Naive thymus-derived CD4-positive, alpha-beta T cell (primary cell): ENCODE measurements at regions of chr4 and their contacts with region 1.

Region 1: DNA sequence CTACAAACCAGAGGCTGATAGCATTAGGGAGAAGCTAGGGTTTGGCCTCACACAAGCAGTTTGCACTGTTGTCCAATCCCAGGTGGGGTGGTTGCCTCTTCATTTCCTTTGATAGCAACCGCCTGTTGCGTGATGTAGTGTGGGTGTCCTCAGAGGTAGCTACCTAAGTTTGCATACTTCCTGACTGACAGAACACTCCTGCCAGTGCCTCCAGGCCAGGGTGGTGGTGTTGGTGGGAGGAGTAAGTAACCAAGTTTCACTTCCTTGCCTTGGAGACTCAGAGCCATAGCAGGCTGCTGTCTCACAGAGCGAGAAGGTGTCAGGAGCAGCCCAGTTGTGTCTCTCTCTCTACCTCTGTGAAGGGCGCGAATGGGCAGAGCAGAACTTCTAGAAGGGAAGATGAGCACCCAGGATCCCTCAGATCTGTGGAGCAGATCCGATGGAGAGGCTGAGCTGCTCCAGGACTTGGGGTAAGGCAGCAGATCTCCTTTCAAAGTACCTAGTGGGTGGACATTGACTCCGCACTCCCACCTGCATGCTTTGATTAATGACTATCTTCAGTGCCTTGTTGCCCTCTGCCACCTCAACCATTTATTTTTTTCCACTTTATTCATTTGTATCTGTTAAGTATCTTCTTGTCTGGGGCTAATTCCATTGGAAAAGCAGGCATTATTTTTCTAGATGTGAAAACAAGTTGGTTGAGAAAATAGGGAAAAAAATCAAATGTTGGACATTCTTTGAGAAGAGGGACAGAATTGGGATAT is at the start of gene DAPP1:
- DNase-seq: peak; percentile 44 to 88 (median 84)
- ATAC-seq: peak; percentile 95
- H3K4me3 ChIP-seq: peak within 1 kb of the TSS; percentile 71
- H3K4me3 Mint-ChIP-seq: peak within 1 kb of the TSS; percentile 71 to 95 (median 92)
- H3K27ac ChIP-seq: peak within 1 kb of the TSS; percentile 77
- H3K27ac Mint-ChIP-seq: peak within 1 kb of the TSS; percentile 87 to 98 (median 96)
- H3K4me1 ChIP-seq: peaks cover 16 to 32% of the 10 kb centered on the region in 2 donors
- H3K4me1 Mint-ChIP-seq: peaks cover 41 to 72% (median 63%) of the 10 kb centered on the region in 7 donors
- H3K27me3 ChIP-seq: no peaks in the 10 kb centered on the region
- H3K27me3 Mint-ChIP-seq: no peaks in the 10 kb centered on the region
- total RNA-seq, gene DAPP1: 10.9 to 49.6 (median 20.7) TPM

Region 2: GRCh38 chr4:98143001-98143899 is 1673.5 kb before region 1 on chr4 and contains the start of gene STPG2:
- CTCF ChIA-PET with region 1: no interaction called
- POLR2A ChIA-PET with region 1: no interaction called
- intact Hi-C with region 1: loop called in 1 of 2 experiments (anchors 5 kb)
- DNase-seq: peak; percentile 85 to 93 (median 91)
- ATAC-seq: peak; percentile 100
- H3K4me3 ChIP-seq: peak within 1 kb of the TSS; percentile 85
- H3K4me3 Mint-ChIP-seq: peak within 1 kb of the TSS; percentile 87 to 99 (median 94)
- H3K27ac ChIP-seq: peak within 1 kb of the TSS; percentile 84
- H3K27ac Mint-ChIP-seq: peak within 1 kb of the TSS; percentile 96 to 99 (median 98)
- H3K4me1 ChIP-seq: peaks cover 6 to 10% of the 10 kb centered on the region in 2 donors
- H3K4me1 Mint-ChIP-seq: peaks cover 12 to 28% (median 24%) of the 10 kb centered on the region in 7 donors
- H3K27me3 ChIP-seq: no peaks in the 10 kb centered on the region
- H3K27me3 Mint-ChIP-seq: peaks cover 0 to 16% (median 0%) of the 10 kb centered on the region in 5 donors
- total RNA-seq, gene STPG2: 0.19 to 0.47 (median 0.30) TPM in 4 of 5 experiments, not detected in the other

Region 3: DNA sequence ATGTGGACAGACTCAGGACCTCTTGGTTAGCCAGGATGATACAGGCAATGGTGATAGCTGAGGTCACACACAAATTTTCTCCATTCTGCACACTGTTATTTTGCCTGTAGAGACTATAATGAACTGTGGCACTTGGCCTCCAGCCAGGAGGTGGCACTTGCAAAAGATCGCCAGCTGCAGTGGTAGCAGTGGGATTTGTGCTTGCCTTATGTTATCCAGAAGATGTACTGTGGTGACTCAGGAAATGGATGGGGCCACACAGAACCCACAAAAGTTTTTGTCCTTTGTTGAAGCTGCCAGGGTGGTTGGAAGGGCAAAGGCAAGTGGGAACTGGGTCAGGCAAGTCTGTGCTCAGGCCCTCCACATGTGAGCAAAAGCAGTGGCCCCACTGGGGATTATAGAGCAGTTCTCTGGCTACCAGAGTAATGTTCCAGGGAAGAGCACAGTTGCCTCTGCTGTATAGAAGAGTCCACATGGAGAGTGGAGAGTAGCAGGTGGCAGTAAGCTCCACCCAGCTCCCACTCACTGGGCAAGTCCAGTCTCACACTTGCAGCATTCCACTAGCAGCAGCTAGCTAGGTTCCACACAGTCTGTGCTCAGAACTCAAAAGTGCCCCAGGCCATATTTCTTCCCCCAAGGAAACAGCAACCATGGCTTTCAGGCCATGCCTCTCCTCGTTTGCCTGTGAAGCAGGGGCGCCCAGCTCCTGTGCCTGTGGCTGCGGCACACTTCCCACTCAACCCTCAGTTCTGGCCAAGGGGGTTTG is 311.7 kb before region 1 on chr4:
- CTCF ChIA-PET with region 1: no interaction called
- POLR2A ChIA-PET with region 1: no interaction called
- intact Hi-C with region 1: loop called (anchors 2 to 5 kb)
- DNase-seq: no peak
- ATAC-seq: no peak
- H3K4me3 ChIP-seq: no peak overlapping the region
- H3K4me3 Mint-ChIP-seq: peak overlapping the region in 3 of 10 donors; percentile 14 to 76 (median 56)
- H3K27ac ChIP-seq: no peak overlapping the region
- H3K27ac Mint-ChIP-seq: peak overlapping the region in 8 of 9 donors; percentile 14 to 91 (median 40)
- H3K4me1 ChIP-seq: peaks cover 8 to 33% of the 10 kb centered on the region in 2 donors
- H3K4me1 Mint-ChIP-seq: peaks cover 31 to 63% (median 57%) of the 10 kb centered on the region in 7 donors
- H3K27me3 ChIP-seq: no peaks in the 10 kb centered on the region
- H3K27me3 Mint-ChIP-seq: peaks cover 0 to 2% (median 0%) of the 10 kb centered on the region in 5 donors

Region 4: GRCh38 chr4:99847362-99847976 is 30.7 kb after region 1 on chr4:
- CTCF ChIA-PET with region 1: no interaction called
- POLR2A ChIA-PET with region 1: interaction called, 35 read pairs
- intact Hi-C with region 1: loop called (anchors 1 kb)
- DNase-seq: peak in 6 of 9 donors; percentile 13 to 39 (median 26)
- ATAC-seq: peak; percentile 61
- H3K4me3 ChIP-seq: peak overlapping the region; percentile 9
- H3K4me3 Mint-ChIP-seq: peak overlapping the region in 9 of 10 donors; percentile 49 to 85 (median 75)
- H3K27ac ChIP-seq: peak overlapping the region; percentile 70
- H3K27ac Mint-ChIP-seq: peak overlapping the region; percentile 88 to 99 (median 96)
- H3K4me1 ChIP-seq: peaks cover 8 to 27% of the 10 kb centered on the region in 2 donors
- H3K4me1 Mint-ChIP-seq: peaks cover 31 to 75% (median 65%) of the 10 kb centered on the region in 7 donors
- H3K27me3 ChIP-seq: no peaks in the 10 kb centered on the region
- H3K27me3 Mint-ChIP-seq: no peaks in the 10 kb centered on the region

Region 5: DNA sequence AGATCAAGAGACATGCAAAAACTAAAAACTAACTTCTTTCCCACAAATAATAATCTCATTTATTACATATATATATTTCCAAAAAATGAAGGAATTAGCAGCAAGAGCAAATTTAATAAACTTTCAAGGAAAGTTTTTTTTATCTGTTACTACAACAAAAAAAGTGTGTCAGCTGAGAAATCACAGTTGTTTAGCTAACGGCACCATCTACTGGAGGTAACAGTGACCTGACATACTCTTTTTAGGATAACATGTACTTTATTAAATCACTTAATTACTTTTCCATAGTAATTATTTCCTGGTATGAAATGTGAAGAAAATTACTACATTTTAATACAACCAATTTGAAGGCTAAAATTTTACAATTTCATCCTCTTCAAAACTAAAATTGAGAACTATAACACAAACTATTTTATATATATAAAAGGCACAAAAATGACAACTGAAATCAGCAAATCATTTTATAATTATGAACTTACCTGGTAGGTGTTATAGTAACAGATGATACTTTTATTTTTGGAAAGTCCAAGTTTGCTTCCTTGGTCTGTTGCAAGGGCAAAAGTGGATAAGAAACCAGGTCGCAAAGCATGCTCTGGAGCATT is 68.4 kb after region 1 on chr4:
- CTCF ChIA-PET with region 1: interaction called, 6 read pairs
- POLR2A ChIA-PET with region 1: no interaction called
- intact Hi-C with region 1: loop called (anchors 1 kb)
- DNase-seq: peak in 7 of 9 donors; percentile 34 to 64 (median 54)
- ATAC-seq: peak; percentile 72
- H3K4me3 ChIP-seq: no peak overlapping the region
- H3K4me3 Mint-ChIP-seq: no peak overlapping the region
- H3K27ac ChIP-seq: no peak overlapping the region
- H3K27ac Mint-ChIP-seq: no peak overlapping the region
- H3K4me1 ChIP-seq: peaks cover 0 to 2% of the 10 kb centered on the region in 2 donors
- H3K4me1 Mint-ChIP-seq: peaks cover 0 to 19% (median 13%) of the 10 kb centered on the region in 7 donors
- H3K27me3 ChIP-seq: no peaks in the 10 kb centered on the region
- H3K27me3 Mint-ChIP-seq: no peaks in the 10 kb centered on the region

Region 6: GRCh38 chr4:100060765-100061416 is 244.2 kb after region 1 on chr4:
- CTCF ChIA-PET with region 1: no interaction called
- POLR2A ChIA-PET with region 1: no interaction called
- intact Hi-C with region 1: no loop called
- DNase-seq: no peak
- ATAC-seq: no peak
- H3K4me3 ChIP-seq: no peak overlapping the region
- H3K4me3 Mint-ChIP-seq: no peak overlapping the region
- H3K27ac ChIP-seq: no peak overlapping the region
- H3K27ac Mint-ChIP-seq: no peak overlapping the region
- H3K4me1 ChIP-seq: no peaks in the 10 kb centered on the region
- H3K4me1 Mint-ChIP-seq: peaks cover 0 to 6% (median 0%) of the 10 kb centered on the region in 7 donors
- H3K27me3 ChIP-seq: no peaks in the 10 kb centered on the region
- H3K27me3 Mint-ChIP-seq: peaks cover 4 to 28% (median 12%) of the 10 kb centered on the region in 5 donors